Panc1 (cell line): ENCODE measurements at regions of chr2 and their contacts with region 1.

Region 1: GRCh38 chr2:96208143-96209010 is at the start of gene STARD7:
- DNase-seq: peak; percentile 83
- ATAC-seq: peak; percentile 98
- H3K4me3 ChIP-seq: peak within 1 kb of the TSS; percentile 73 to 91
- H3K27ac ChIP-seq: peak within 1 kb of the TSS; percentile 98
- H3K4me1 ChIP-seq: peaks cover 33% of the 10 kb centered on the region
- H3K27me3 ChIP-seq: no peaks in the 10 kb centered on the region
- CTCF ChIP-seq: peak; percentile 46; the same call in 1 of the 2 replicates
- total RNA-seq, gene STARD7: 133 TPM

Region 2: DNA sequence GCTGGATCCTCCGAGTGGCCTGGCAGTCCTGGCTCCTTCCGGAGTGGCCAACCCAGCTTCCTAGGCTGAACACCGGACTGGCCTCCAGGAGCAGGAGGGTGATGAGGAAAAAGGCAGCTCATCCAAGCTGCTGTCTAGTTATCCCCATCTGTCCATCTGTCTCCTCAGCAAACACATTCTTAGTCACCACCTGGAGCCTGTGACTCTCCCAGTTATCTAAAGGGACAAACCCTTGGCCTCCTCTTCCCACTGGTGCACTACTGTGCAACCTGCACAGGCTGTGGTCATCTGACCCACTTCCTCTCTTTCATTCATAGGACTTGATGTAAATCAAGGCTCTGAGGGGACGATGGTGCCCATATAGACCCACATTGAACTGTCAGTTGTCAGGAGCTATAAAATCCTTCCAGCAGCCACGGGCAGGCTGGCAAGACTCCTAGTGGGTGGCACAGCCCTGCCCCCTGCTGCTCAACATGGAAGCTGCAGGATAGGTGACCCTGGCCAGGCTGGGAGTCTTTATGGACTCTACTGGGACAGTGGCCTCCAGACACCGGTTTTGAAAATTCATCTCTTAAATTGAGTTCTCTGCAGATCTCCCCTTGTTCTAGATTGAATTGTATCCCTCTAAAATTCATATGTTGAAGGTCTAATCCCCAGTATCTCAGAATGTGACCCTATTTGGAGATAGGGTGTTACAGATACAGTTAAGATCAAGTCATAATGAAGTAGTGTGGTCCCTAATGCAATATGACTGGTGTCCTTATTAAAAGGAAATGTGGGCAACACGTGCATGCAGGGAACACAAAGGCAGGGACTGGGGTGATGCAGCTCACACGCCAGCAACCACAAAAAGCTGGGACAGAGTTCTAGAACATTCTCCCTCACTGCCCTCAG is 33.9 kb before region 1 on chr2:
- CTCF ChIA-PET with region 1: no interaction called
- POLR2A ChIA-PET with region 1: no interaction called
- in situ Hi-C with region 1: no loop called
- intact Hi-C with region 1: no loop called
- DNase-seq: peak; percentile 45
- ATAC-seq: peak; percentile 95
- H3K4me3 ChIP-seq: no peak overlapping the region
- H3K27ac ChIP-seq: no peak overlapping the region
- H3K4me1 ChIP-seq: no peaks in the 10 kb centered on the region
- H3K27me3 ChIP-seq: no peaks in the 10 kb centered on the region
- CTCF ChIP-seq: peak; percentile 96

Region 3: GRCh38 chr2:96186562-96186961 is 21.8 kb before region 1 on chr2:
- CTCF ChIA-PET with region 1: interaction called, 3 read pairs
- POLR2A ChIA-PET with region 1: interaction called, 12 read pairs
- in situ Hi-C with region 1: no loop called
- intact Hi-C with region 1: no loop called
- DNase-seq: no peak
- ATAC-seq: no peak
- H3K4me3 ChIP-seq: no peak overlapping the region
- H3K27ac ChIP-seq: no peak overlapping the region
- H3K4me1 ChIP-seq: no peaks in the 10 kb centered on the region
- H3K27me3 ChIP-seq: no peaks in the 10 kb centered on the region
- CTCF ChIP-seq: no peak